ENCODE measurements at regions of chr21 and their contacts with region 1.

Region 1: DNA sequence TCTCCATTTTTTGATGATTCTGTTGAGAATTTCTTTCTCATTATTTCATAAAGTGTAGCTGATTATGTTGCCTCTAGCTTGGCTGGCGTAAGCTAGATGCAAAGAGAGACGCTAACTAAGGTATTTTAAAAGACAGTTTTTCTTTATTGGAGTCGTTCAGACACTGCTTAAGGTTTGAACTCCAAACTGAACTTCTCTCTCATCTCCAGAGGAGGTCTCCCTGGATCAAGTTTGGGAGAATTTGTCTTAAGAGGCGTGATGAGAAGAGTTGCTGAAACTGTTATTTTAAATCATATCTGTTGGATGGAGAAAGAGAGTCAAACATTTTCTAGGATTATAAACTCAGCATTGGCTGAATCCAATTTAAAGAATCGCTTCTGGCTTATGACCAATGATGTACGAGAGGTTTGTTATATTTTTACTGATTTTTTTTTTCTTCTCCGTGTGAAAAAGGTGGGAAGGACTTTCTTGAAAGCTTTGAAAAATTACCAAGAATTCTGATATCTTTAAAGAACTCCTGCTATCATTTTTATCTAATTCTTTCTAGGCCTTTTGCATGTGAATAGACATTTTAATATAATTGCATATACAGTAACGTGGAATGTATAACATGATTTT is 34.0 kb downstream of the MAP3K7CL start:
- DNase-seq: no peak
- ATAC-seq: peak; percentile 79 to 81
- H3K4me3 ChIP-seq: no peak overlapping the region
- H3K27ac ChIP-seq: no peak overlapping the region
- H3K4me1 ChIP-seq: no peaks in the 10 kb centered on the region
- H3K27me3 ChIP-seq: no peaks in the 10 kb centered on the region

Region 2: DNA sequence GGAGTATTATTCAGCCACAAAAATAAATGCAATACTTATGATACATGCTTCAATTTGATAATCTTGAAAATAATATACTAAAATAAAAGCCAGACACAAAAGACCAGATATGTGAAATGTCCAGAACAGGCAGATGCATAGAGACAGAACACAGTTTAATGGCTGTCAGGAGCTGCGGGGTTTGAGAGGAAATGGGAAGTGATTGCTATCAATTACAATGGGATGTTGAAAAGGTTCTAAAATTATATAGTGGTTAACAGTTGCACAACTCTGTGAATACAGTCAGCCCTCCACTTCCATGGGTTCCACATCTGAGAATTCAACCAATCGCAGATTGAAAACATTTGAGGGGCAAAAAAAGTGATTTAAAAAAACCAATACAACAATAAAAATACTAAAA is 225.7 kb before region 1 on chr21:
- intact Hi-C with region 1: no loop called
- DNase-seq: no peak
- ATAC-seq: no peak
- H3K4me3 ChIP-seq: no peak overlapping the region
- H3K27ac ChIP-seq: no peak overlapping the region
- H3K4me1 ChIP-seq: no peaks in the 10 kb centered on the region
- H3K27me3 ChIP-seq: no peaks in the 10 kb centered on the region

Region 3: GRCh38 chr21:29298348-29299045 is 134.1 kb after region 1 on chr21 and contains the start of gene BACH1:
- intact Hi-C with region 1: loop called in 1 of 4 experiments (anchors 5 kb)
- DNase-seq: peak; percentile 93 to 97 (median 96)
- ATAC-seq: peak; percentile 95
- H3K4me3 ChIP-seq: peak within 1 kb of the TSS; percentile 99
- H3K27ac ChIP-seq: peak within 1 kb of the TSS; percentile 77
- H3K4me1 ChIP-seq: peaks cover 9% of the 10 kb centered on the region
- H3K27me3 ChIP-seq: no peaks in the 10 kb centered on the region
- total RNA-seq, gene BACH1: 44.8 to 68.3 (median 47.4) TPM

Region 4: DNA sequence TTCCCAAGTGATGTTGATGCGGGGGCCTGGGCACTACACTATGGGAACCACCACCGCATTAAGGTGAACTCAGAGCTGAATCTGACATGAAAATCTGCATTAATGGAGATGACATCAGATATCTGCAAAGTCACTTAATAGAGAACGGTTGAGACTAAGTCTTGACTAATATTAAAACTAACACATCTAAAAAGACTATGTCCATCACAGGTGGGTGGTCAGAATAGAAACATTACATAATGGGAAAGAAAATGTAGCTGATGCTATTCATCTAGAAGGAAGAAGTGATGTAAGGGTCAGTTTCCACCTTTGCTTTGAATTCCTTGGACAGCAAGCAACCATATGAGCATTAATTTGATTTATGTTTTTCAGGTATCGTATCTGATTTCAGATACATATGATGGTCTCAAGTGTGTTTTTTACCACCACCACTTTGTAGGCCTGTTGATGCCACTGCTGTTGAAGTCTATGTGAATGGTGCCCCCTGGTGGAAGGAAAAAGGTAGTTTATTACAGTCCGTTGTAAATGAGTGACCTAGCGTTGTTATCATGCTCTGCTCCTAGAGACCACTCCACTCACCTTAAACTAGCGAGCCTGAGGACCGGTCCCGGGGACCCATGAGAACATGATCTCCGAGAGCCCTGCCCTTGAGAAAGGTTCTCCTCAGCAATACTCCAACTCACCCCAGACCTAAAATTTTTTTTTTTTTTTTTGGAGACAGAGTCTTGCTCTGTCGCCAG is 207.8 kb after region 1 on chr21:
- intact Hi-C with region 1: loop called (anchors 5 kb)
- DNase-seq: no peak
- ATAC-seq: peak; percentile 89 to 91
- H3K4me3 ChIP-seq: no peak overlapping the region
- H3K27ac ChIP-seq: no peak overlapping the region
- H3K4me1 ChIP-seq: no peaks in the 10 kb centered on the region
- H3K27me3 ChIP-seq: no peaks in the 10 kb centered on the region

Region 5: GRCh38 chr21:29449306-29449950 is 285.0 kb after region 1 on chr21:
- intact Hi-C with region 1: no loop called
- DNase-seq: no peak
- ATAC-seq: no peak
- H3K4me3 ChIP-seq: no peak overlapping the region
- H3K27ac ChIP-seq: no peak overlapping the region
- H3K4me1 ChIP-seq: no peaks in the 10 kb centered on the region
- H3K27me3 ChIP-seq: no peaks in the 10 kb centered on the region